B cell (primary cell): ENCODE measurements at regions of chr7 and their contacts with region 1.

Region 1: GRCh38 chr7:7251742-7252141 is 69.4 kb downstream of the C1GALT1 start:
- DNase-seq: peak; percentile 88
- ATAC-seq: peak; percentile 99
- H3K4me3 ChIP-seq: peak overlapping the region in 2 of 5 experiments; percentile 7 to 43
- H3K4me3 Mint-ChIP-seq: peak overlapping the region; percentile 73
- H3K27ac ChIP-seq: peak overlapping the region; percentile 74 to 75
- H3K27ac Mint-ChIP-seq: peak overlapping the region; percentile 96
- H3K4me1 ChIP-seq: peaks cover 37 to 78% of the 10 kb centered on the region in 2 donors
- H3K4me1 Mint-ChIP-seq: peaks cover 76% of the 10 kb centered on the region
- H3K27me3 ChIP-seq: no peaks in the 10 kb centered on the region
- H3K27me3 Mint-ChIP-seq: no peaks in the 10 kb centered on the region
- CTCF ChIP-seq: no peak

Region 2: GRCh38 chr7:7201578-7202374 is 50.0 kb before region 1 on chr7:
- CTCF ChIA-PET with region 1: no interaction called
- POLR2A ChIA-PET with region 1: no interaction called
- intact Hi-C with region 1: loop called (anchors 2 kb)
- DNase-seq: peak; percentile 76
- ATAC-seq: peak; percentile 99
- H3K4me3 ChIP-seq: peak overlapping the region in 3 of 5 experiments; percentile 23 to 46 (median 33)
- H3K4me3 Mint-ChIP-seq: peak overlapping the region; percentile 64
- H3K27ac ChIP-seq: peak overlapping the region; percentile 52 to 75
- H3K27ac Mint-ChIP-seq: peak overlapping the region; percentile 79
- H3K4me1 ChIP-seq: peaks cover 26 to 46% of the 10 kb centered on the region in 2 donors
- H3K4me1 Mint-ChIP-seq: peaks cover 84% of the 10 kb centered on the region
- H3K27me3 ChIP-seq: no peaks in the 10 kb centered on the region
- H3K27me3 Mint-ChIP-seq: no peaks in the 10 kb centered on the region
- CTCF ChIP-seq: no peak